Endothelial cell of umbilical vein (primary cell): ENCODE measurements at regions of chr1 and their contacts with region 1.

Region 1: GRCh38 chr1:45490626-45491486 is at the start of gene TESK2:
- DNase-seq: peak; percentile 100
- H3K4me3 ChIP-seq: peak within 1 kb of the TSS; percentile 53 to 63 (median 56)
- H3K27ac ChIP-seq: no peak within 1 kb of the TSS
- H3K4me1 ChIP-seq: peaks cover 6% of the 10 kb centered on the region
- H3K27me3 ChIP-seq: peaks cover 8 to 10% of the 10 kb centered on the region in 2 experiments
- CTCF ChIP-seq: peak in 1 of 2 donors; percentile 32
- POLR2A ChIP-seq: no peak
- total RNA-seq, gene TESK2: 2.1 and 2.2 TPM in 2 replicates

Region 2: DNA sequence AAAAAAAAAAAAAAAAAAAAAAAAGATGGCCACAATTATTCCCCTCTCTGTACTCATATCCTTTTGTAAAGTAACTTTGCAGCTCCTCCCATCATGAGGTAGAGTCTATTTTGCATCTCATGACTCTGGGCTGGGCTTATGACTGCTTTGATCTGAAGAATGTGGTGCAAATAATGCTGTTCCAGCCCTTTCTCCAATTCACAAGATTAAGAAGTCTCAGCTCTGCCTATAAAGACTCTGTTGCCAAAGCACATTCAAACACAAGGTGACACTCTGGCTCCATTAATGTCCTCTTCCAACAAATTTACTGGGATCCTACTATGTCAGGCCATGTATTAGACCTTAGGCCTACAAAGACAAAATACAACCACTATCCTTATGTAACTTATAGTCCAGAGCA is 583.0 kb before region 1 on chr1:
- CTCF ChIA-PET with region 1: interaction called, 11 read pairs
- POLR2A ChIA-PET with region 1: no interaction called
- dilution Hi-C with region 1: no loop called
- intact Hi-C with region 1: no loop called
- DNase-seq: peak; percentile 12
- H3K4me3 ChIP-seq: no peak overlapping the region
- H3K27ac ChIP-seq: no peak overlapping the region
- H3K4me1 ChIP-seq: no peaks in the 10 kb centered on the region
- H3K27me3 ChIP-seq: no peaks in the 10 kb centered on the region
- CTCF ChIP-seq: no peak
- POLR2A ChIP-seq: no peak

Region 3: DNA sequence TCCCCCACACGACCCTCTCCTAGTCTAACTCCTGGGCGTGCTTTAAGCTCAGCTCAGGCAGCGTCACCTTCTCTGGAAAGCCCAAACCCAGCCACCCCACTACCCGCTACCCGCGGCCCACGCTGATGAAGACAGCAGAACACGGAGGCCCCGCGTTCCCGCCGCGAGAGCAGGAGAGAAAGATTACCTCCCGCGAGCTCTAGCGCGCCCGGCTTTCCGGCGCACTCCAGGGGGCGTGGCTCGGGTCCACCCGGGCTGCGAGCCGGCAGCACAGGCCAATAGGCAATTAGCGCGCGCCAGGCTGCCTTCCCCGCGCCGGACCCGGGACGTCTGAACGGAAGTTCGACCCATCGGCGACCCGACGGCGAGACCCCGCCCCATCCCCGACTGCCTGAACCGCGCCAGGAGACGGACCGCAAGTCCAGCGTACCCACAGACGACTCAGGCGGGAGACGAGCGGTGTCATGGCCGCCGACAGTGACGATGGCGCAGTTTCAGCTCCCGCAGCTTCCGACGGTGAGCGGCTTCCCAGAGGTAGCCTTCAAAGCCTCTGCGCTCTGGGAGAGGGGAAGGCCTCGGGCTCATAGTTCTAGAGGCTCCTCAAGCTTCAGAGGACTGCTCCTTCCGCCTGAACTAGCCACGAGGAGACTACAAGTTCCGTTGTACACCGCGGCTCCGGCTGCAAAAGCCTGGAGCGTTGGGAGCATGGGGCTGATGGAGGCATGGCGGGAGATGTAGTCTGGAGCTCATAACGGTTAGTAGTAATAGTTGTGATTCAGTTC is 150.9 kb before region 1 on chr1 and contains the starts of genes MUTYH and TOE1:
- CTCF ChIA-PET with region 1: interaction called, 25 read pairs
- POLR2A ChIA-PET with region 1: interaction called, 4 read pairs
- dilution Hi-C with region 1: no loop called
- intact Hi-C with region 1: loop called (anchors 1 kb)
- DNase-seq: peak; percentile 94
- H3K4me3 ChIP-seq: peak within 1 kb of the TSS; percentile 48 to 82 (median 56)
- H3K27ac ChIP-seq: peak within 1 kb of the TSS; percentile 85
- H3K4me1 ChIP-seq: peaks cover 22% of the 10 kb centered on the region
- H3K27me3 ChIP-seq: no peaks in the 10 kb centered on the region
- CTCF ChIP-seq: no peak
- POLR2A ChIP-seq: peak; percentile 72
- total RNA-seq, gene MUTYH: 14.3 and 16.6 TPM in 2 replicates
- total RNA-seq, gene TOE1: 15.8 and 16.3 TPM in 2 replicates

Region 4: DNA sequence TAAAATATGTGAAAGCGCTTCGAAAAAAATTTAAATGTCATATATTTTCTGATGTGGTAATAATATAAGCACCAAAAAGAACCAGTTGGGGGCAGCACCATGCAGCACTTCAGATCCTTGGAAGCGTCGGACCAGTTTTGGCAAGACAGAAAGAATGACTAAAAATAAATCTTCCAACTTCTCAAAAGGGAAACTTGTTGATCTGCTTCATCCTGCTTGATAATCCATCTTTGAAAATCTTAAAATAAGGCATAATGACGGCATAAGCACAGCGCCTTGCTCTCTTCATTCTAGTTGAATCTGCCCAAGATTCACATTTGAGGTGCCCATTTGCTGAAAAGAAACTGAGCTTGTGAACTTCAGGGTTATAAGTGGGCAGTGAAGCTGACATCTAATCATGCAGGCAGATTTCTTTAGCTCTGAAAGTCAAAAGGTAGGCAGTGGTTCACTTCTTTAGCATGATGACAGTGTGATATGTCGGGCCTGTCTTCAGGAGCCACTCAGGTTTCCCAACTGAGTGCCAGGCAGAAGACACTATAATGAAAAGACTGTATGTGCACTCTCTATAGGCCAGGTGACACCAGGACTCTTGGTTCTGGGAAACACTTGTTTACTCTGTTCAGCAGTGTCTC is 130.9 kb before region 1 on chr1:
- CTCF ChIA-PET with region 1: interaction called, 457 read pairs
- POLR2A ChIA-PET with region 1: interaction called, 6 read pairs
- dilution Hi-C with region 1: loop called (anchors 25 kb)
- intact Hi-C with region 1: loop called (anchors 1 kb)
- DNase-seq: peak; percentile 74
- H3K4me3 ChIP-seq: no peak overlapping the region
- H3K27ac ChIP-seq: no peak overlapping the region
- H3K4me1 ChIP-seq: peaks cover 7% of the 10 kb centered on the region
- H3K27me3 ChIP-seq: no peaks in the 10 kb centered on the region
- CTCF ChIP-seq: peak; percentile 47 to 64
- POLR2A ChIP-seq: no peak

Region 5: GRCh38 chr1:45521398-45522323 is 30.8 kb after region 1 on chr1 and contains the start of gene PRDX1:
- CTCF ChIA-PET with region 1: interaction called, 3 read pairs
- POLR2A ChIA-PET with region 1: interaction called, 28 read pairs
- dilution Hi-C with region 1: no loop called
- intact Hi-C with region 1: no loop called
- DNase-seq: peak; percentile 96
- H3K4me3 ChIP-seq: peak within 1 kb of the TSS; percentile 79 to 86 (median 80)
- H3K27ac ChIP-seq: peak within 1 kb of the TSS; percentile 87
- H3K4me1 ChIP-seq: peaks cover 19% of the 10 kb centered on the region
- H3K27me3 ChIP-seq: no peaks in the 10 kb centered on the region
- CTCF ChIP-seq: no peak
- POLR2A ChIP-seq: peak; percentile 100
- total RNA-seq, gene PRDX1: 681 and 685 TPM in 2 replicates